ENCODE measurements at regions of chr2 and their contacts with region 1.

Region 1: DNA sequence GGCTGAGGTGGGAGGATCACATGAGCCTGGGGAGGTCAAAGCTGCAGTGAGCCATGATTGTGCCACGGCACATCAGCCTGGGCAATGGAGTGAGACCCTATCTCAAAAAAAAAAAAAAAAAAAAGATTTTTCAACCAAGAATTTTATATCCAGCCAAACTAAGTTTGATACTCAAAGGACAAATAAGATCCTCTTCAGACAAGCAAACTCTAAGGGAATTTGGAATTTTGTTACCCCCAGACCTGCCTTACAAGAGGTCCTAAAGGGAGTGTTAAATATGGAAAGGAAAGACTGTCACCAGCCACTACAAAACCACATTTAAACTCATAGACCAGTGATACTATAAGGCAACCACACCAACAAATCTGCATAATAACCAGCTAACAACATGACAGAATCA is 67.5 kb downstream of the WDPCP start:
- H3K4me3 Mint-ChIP-seq: no peak overlapping the region
- H3K27ac Mint-ChIP-seq: no peak overlapping the region
- H3K4me1 Mint-ChIP-seq: peaks cover 9% of the 10 kb centered on the region
- H3K27me3 Mint-ChIP-seq: no peaks in the 10 kb centered on the region

Region 2: GRCh38 chr2:63506320-63506719 is 14.5 kb before region 1 on chr2:
- intact Hi-C with region 1: loop called (anchors 2 kb)
- H3K4me3 Mint-ChIP-seq: no peak overlapping the region
- H3K27ac Mint-ChIP-seq: no peak overlapping the region
- H3K4me1 Mint-ChIP-seq: peaks cover 18% of the 10 kb centered on the region
- H3K27me3 Mint-ChIP-seq: no peaks in the 10 kb centered on the region

Measured in dendritic cell treated with granulocyte-macrophage colony-stimulating factor and Interleukin-4, amounts not matched to agents 40 ng/mL and 50 ng/mL, for 4 days (primary cell).